Activated CD4-positive, alpha-beta T cell treated with anti-CD3 and anti-CD28 coated beads, Interleukin-2, amount 10 ng/mL, durations not matched to agents 24 days and 14 days (primary cell): ENCODE measurements at regions of chr3 and their contacts with region 1.

Region 1: GRCh38 chr3:195442573-195443390 is at the start of gene ACAP2:
- DNase-seq: peak; percentile 100
- H3K4me3 Mint-ChIP-seq: peak within 1 kb of the TSS; percentile 97
- H3K27ac Mint-ChIP-seq: peak within 1 kb of the TSS; percentile 91
- H3K4me1 Mint-ChIP-seq: peaks cover 39% of the 10 kb centered on the region
- H3K27me3 Mint-ChIP-seq: no peaks in the 10 kb centered on the region
- total RNA-seq, gene ACAP2: 39.1 and 40.0 TPM in 2 replicates

Region 2: DNA sequence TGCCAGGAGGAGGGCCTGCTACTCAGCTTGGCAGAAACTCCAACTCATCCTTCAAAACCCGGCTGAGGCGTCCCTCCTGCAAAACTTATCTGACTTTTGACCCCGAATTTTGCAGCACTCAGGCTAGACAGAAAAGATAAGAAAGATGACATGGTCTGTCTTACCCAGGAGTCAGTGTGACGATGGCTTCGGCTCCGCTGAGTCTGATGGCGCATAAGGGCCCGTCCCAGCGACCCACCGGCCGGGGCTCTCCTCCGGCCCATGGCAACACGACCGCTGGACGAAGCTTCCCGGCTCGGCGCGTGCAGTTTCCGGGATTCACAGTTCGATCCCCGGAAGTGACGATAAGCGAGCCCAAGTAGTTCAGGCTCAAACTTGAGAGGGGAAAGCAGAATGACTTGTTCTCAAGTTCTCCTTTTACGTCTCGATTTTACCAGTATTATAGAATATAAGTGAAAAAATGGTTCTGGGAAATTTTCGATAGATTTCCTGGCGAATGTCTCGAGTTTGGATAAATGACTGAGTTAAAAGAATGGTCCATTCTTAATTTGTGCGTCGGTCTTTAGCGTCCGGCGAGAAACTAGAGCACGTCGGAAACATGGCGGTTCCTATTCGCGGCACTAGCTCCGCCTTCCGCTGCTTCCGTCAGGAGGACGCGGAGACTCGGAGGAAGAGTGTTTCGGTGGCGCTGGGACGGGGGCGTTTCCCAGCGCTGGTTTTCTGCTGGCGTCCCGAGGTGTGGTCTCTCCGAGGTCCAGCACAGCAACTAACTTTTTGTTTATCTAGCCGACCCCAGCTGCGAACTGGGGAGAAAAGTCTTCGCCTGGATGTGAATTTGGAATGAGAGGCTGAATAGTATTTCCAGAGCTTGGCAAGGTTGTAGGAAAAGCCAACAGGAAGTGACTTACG is 770.6 kb before region 1 on chr3 and contains the start of gene LSG1:
- intact Hi-C with region 1: loop called (anchors 5 kb)
- DNase-seq: peak; percentile 97
- H3K4me3 Mint-ChIP-seq: peak within 1 kb of the TSS; percentile 99
- H3K27ac Mint-ChIP-seq: peak within 1 kb of the TSS; percentile 97
- H3K4me1 Mint-ChIP-seq: peaks cover 48% of the 10 kb centered on the region
- H3K27me3 Mint-ChIP-seq: no peaks in the 10 kb centered on the region
- total RNA-seq, gene LSG1: 59.0 and 60.2 TPM in 2 replicates

Region 3: DNA sequence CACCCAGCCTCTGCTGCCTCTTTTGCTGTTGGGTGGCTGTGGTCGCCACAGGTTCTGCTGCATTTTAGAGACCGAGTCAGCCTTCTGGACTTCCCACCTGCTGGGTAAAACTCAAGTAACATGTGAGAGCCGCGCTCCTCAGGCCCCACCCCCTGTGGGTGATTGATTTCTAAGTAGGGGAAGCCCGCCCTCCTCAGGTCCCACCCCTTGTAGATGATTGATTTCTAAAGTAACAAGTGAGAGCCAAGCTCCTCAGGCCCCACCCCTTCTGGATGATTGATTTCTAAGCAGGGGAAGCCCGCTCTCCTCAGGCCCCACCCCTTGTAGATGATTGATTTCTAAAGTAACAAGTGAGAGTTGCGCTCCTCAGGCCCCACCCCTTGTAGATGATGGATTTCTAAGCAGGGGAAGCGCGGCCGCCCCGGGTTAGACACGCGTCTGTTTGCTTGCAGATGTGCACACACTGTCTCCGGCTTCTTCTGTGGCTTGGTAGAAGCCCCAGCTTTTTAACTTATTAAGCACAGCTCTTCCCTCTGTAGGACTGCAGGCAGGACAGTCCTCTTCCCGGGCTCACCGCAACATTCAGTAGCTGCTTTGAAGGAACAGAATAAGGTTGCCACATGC is 673.6 kb before region 1 on chr3:
- intact Hi-C with region 1: loop called (anchors 10 kb)
- DNase-seq: peak; percentile 96
- H3K4me3 Mint-ChIP-seq: peak overlapping the region; percentile 80
- H3K27ac Mint-ChIP-seq: peak overlapping the region; percentile 83
- H3K4me1 Mint-ChIP-seq: peaks cover 10% of the 10 kb centered on the region
- H3K27me3 Mint-ChIP-seq: peaks cover 31% of the 10 kb centered on the region

Region 4: GRCh38 chr3:195407531-195408409 is 35.0 kb before region 1 on chr3:
- intact Hi-C with region 1: loop called (anchors 2 kb)
- DNase-seq: peak; percentile 62
- H3K4me3 Mint-ChIP-seq: peak overlapping the region; percentile 51
- H3K27ac Mint-ChIP-seq: peak overlapping the region; percentile 54
- H3K4me1 Mint-ChIP-seq: peaks cover 32% of the 10 kb centered on the region
- H3K27me3 Mint-ChIP-seq: no peaks in the 10 kb centered on the region

Region 5: GRCh38 chr3:195458316-195458717 is 15.5 kb after region 1 on chr3:
- intact Hi-C with region 1: no loop called
- DNase-seq: peak; percentile 70
- H3K4me3 Mint-ChIP-seq: peak overlapping the region; percentile 36
- H3K27ac Mint-ChIP-seq: peak overlapping the region; percentile 32
- H3K4me1 Mint-ChIP-seq: peaks cover 9% of the 10 kb centered on the region
- H3K27me3 Mint-ChIP-seq: peaks cover 1% of the 10 kb centered on the region

Region 6: DNA sequence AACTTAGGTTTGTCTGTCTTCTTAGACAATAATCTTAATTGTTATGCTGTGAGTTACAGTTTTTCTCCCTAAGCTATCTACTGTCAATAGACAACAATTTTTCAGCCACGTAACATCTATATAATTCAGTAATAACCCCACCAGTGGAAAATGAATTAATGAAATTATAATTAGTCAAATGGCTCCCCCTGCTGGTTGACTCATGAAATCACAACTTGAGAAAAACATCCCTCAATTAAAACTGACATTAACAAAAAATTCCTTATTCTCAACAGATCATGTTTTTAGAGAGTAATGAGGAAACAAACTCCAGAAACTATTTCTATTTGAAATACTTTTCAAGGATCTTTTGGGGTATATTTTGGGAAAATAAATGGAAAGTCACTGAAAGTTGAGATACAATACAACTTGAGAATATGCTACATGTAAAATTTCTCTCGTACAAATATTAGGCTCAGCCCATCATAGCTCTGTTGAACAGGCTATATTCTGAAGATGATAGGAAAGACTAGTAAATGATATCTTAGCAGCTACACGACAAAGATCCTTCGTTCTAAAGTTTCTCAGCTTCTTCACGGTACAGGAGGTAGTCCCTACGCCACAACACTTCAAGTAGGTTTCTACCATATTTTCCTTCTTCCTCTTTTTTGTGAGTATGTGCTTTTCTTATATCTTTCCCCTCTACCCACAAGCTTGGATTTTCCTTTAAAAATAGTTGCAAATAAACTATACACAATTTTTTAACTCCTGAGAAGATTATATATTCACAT is 79.7 kb after region 1 on chr3:
- intact Hi-C with region 1: loop called (anchors 1 kb)
- DNase-seq: peak; percentile 73
- H3K4me3 Mint-ChIP-seq: no peak overlapping the region
- H3K27ac Mint-ChIP-seq: peak overlapping the region; percentile 18
- H3K4me1 Mint-ChIP-seq: peaks cover 25% of the 10 kb centered on the region
- H3K27me3 Mint-ChIP-seq: no peaks in the 10 kb centered on the region

Region 7: GRCh38 chr3:196432137-196432879 is 989.5 kb after region 1 on chr3 and contains the start of gene UBXN7:
- intact Hi-C with region 1: loop called (anchors 5 kb)
- DNase-seq: peak; percentile 98
- H3K4me3 Mint-ChIP-seq: peak within 1 kb of the TSS; percentile 85
- H3K27ac Mint-ChIP-seq: peak within 1 kb of the TSS; percentile 97
- H3K4me1 Mint-ChIP-seq: peaks cover 20% of the 10 kb centered on the region
- H3K27me3 Mint-ChIP-seq: no peaks in the 10 kb centered on the region
- total RNA-seq, gene UBXN7: 65.5 and 70.8 TPM in 2 replicates